ENCODE measurements at regions of chr17 and their contacts with region 1.

Region 1: GRCh38 chr17:66715745-66716156 is 119.2 kb upstream of the CACNG5 start:
- DNase-seq: peak in 1 of 10 donors; percentile 17
- H3K4me3 ChIP-seq: no peak overlapping the region
- H3K27ac ChIP-seq: peak overlapping the region in 56 of 59 donors; percentile 32 to 96 (median 79)
- H3K27me3 ChIP-seq: no peaks in the 10 kb centered on the region
- CTCF ChIP-seq: peak; percentile 65 to 95 (median 84)

Region 2: GRCh38 chr17:66691644-66692420 is 23.9 kb before region 1 on chr17:
- intact Hi-C with region 1: no loop called
- DNase-seq: no peak
- H3K4me3 ChIP-seq: no peak overlapping the region
- H3K27ac ChIP-seq: peak overlapping the region in 53 of 59 donors; percentile 5 to 86 (median 56)
- H3K27me3 ChIP-seq: no peaks in the 10 kb centered on the region
- CTCF ChIP-seq: no peak

Region 3: DNA sequence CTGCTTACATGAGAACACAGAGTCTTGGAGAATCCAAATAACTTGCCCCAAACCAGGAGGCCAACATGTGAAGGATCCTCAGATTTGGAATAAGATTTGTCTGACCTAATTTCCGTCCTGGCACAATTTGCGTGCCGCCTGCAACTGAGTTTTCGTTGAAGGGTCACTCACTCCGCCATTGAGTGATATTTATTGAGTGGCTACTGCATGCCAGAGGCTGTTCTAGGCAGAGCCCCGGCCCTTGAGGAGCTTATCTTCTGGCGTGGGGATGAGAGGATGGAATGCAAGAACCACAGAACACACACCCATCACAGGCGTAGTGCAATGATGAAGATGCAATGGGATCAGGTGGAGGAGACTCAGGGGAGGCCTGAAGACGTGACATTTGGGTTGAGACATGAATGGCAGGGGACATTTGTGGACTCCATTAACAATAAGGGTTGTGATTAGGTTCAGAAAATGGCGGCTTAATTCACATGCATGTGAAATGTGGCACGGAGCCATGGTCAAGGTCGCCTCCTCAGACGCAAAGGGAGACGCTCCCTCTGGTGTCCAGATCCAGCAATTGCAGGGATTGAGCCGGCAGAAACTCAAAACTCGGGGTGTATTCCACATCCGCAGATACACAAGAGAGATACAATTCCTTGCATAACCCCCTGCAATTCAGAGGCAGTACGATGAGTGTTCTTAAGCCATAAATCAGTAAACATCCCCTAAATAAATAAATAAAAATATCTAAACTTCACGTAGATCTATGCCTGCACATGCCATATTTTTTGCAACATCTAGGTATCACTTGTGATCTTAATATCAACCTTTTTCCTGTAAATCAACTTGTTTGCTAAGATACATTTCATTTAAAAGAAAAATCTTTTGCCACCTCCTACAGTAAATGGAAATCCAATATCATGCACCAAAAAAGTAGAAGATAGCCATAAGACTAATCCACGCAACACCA is 190.8 kb after region 1 on chr17:
- intact Hi-C with region 1: loop called (anchors 2 to 5 kb)
- DNase-seq: peak; percentile 53 to 87 (median 80)
- H3K4me3 ChIP-seq: no peak overlapping the region
- H3K27ac ChIP-seq: no peak overlapping the region
- H3K27me3 ChIP-seq: no peaks in the 10 kb centered on the region
- CTCF ChIP-seq: peak; percentile 72 to 99 (median 92)

Region 4: DNA sequence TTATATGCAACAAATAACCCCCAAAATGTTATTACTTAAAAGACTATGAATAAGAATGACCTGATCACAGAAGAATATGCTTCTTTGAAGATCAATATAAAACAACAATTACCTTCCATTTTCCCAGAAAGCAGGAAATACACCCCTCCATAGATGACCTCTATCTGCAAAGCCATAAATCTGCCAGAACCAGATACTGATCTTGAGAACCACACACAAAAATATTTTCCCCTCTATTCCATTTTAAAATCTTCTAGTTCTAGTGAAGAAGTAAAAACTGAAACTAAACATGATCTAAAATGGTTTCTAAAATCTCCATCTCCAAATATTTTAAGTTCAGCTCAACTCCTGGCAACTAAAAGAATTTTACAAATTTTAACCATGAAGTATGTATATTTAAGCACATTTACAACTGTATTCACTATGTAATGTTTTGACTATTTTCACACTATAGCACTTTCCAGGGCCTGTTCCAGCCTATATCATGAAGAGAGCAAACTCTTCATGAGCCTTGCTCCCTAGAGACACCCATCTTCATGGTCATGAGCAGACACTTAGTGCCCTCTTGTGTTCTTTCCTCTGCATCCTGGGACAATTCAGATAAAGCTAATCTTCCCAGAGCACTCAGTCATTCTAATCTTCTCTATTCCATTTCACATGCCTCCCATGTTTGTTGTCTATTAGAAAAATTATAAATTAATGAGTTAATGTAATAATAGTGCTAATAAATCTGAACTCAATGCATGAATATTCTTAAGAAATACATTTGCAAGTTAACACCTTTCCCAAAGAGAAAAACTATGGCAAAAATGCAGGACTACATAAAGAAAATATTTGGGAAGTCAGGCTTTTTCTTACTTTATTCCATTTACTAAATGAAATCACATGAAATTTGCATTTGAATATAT is 442.2 kb after region 1 on chr17:
- intact Hi-C with region 1: loop called (anchors 5 to 10 kb)
- DNase-seq: no peak
- H3K4me3 ChIP-seq: no peak overlapping the region
- H3K27ac ChIP-seq: no peak overlapping the region
- H3K27me3 ChIP-seq: no peaks in the 10 kb centered on the region
- CTCF ChIP-seq: peak in 52 of 56 donors; percentile 27 to 75 (median 52)